ENCODE measurements at regions of chr2 and their contacts with region 1.

Region 1: DNA sequence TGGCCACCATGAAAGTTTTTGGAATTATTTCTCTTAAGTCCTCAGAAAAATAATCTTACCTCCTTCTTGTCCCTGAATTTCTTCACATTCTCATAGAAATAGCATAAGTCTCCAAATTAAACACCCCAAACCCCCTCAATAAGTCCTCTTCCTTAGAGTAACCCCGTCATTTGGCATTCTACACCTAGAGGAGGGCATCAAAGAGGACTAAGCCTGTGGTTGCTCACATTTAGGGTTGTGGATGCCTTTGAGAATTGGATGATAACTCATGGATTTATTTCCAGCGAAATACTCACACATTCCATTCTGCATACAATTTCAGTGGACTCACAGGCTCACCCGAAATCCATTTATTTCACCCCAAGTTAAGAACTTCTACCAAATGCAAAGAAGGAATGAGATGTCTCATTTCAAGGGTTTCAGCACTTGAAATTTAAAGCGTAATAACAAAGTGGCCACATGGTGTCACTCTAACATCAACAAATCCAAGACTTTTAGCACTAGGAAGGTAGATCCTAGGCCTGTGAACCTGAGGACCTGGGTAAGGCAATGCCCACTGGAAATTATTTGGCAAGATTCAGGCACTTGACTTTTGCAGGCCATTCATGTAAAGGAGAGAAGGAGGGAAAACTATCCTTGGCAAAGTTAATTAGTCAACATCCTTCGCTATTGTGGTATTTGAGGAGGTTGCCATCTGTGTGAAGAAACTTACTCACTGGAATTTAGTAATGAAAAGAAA is 24.6 kb downstream of the DYTN start:
- DNase-seq: peak; percentile 46
- H3K4me3 ChIP-seq: no peak overlapping the region
- H3K27ac ChIP-seq: no peak overlapping the region
- H3K4me1 ChIP-seq: no peaks in the 10 kb centered on the region
- H3K27me3 ChIP-seq: no peaks in the 10 kb centered on the region
- CTCF ChIP-seq: peak; percentile 8 to 67 (median 62)
- POLR2A ChIP-seq: no peak

Region 2: DNA sequence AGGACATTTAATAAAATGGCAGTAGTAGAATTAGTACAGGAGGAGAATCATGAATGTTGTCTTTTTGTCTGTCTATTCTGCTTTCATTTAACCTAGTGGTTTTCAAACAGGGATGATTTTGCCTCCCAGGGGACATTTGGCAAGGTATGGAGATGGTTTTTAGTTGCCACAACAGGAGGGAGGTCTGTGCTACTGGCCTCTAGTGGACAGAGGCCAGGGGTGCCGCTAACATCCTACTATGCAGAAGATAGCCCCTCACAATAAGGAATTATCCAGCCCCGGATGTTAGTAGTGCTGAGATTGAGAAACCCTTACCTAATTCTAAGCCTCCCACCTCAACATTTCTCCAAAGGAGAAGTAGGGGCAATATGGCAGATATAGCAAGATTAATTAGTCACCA is 90.2 kb after region 1 on chr2:
- intact Hi-C with region 1: loop called (anchors 2 kb)
- DNase-seq: no peak
- H3K4me3 ChIP-seq: no peak overlapping the region
- H3K27ac ChIP-seq: no peak overlapping the region
- H3K4me1 ChIP-seq: no peaks in the 10 kb centered on the region
- H3K27me3 ChIP-seq: no peaks in the 10 kb centered on the region
- CTCF ChIP-seq: no peak
- POLR2A ChIP-seq: no peak

Region 3: DNA sequence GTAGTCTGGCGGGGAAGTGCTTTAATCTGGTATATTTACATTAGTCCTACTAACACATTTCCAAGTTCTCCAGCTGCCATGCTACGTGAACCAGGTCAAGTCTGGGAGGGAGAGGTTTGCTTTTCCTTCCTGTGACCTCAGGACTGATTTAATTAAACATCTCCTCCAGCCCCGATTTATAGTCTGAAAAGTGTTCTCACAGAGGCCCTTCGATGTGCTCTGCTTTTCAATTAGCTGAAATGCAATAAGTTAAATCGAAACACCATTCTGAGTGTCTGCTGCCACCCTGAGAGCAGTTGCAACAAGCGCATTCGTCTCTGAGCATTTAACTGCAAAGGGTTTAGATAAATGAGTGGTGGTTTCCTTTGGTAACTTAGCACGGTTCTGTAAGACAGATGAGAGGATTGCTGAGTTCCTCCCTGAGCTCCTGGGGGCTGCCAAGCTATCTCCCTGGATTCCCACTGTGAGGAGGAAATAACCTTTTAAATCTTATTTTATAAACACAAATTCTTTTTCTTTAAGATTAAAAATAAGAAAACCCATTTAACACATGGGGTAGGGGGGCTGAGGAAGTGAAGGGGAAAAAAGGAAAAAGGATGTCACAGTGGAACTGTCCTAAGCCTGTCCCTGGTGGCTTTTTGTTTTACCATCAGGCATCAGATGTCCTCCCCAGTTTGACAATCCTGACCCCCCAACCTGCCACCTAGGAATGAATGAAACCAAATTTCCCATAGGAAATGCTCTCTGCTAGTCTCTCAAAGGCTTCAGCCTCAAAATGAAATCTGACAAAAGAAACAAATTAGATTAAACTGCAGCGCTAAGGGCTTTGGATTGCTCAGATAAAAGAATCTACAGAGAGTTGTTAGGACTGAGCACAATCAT is 779.7 kb after region 1 on chr2:
- intact Hi-C with region 1: loop called (anchors 5 kb)
- DNase-seq: peak; percentile 21
- H3K4me3 ChIP-seq: no peak overlapping the region
- H3K27ac ChIP-seq: no peak overlapping the region
- H3K4me1 ChIP-seq: no peaks in the 10 kb centered on the region
- H3K27me3 ChIP-seq: no peaks in the 10 kb centered on the region
- CTCF ChIP-seq: peak in 3 of 4 experiments; percentile 21 to 58 (median 49)
- POLR2A ChIP-seq: no peak